Cardiac septum (tissue), 1 donor: ENCODE measurements at regions of chr12 and their contacts with region 1.

Region 1: DNA sequence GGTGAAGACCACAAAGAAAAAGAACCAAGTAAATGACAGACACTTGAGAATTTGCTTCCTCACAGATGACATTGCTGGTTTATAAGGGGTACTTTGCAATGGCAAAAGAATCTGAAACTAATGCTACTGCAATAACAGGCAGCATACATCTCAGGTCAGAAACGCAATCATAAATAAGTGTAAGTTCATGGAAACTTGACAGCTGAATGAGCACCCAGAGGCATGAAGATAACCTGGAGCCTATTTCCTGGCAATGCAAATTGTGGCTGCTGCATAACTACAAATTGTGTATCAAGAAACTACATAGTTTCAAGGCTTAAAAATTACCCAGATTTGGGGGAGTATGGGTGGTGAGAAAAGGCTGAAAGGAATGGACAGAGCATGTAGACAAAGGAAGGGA is 8.5 kb upstream of the MYO1A start:
- DNase-seq: no peak

Region 2: DNA sequence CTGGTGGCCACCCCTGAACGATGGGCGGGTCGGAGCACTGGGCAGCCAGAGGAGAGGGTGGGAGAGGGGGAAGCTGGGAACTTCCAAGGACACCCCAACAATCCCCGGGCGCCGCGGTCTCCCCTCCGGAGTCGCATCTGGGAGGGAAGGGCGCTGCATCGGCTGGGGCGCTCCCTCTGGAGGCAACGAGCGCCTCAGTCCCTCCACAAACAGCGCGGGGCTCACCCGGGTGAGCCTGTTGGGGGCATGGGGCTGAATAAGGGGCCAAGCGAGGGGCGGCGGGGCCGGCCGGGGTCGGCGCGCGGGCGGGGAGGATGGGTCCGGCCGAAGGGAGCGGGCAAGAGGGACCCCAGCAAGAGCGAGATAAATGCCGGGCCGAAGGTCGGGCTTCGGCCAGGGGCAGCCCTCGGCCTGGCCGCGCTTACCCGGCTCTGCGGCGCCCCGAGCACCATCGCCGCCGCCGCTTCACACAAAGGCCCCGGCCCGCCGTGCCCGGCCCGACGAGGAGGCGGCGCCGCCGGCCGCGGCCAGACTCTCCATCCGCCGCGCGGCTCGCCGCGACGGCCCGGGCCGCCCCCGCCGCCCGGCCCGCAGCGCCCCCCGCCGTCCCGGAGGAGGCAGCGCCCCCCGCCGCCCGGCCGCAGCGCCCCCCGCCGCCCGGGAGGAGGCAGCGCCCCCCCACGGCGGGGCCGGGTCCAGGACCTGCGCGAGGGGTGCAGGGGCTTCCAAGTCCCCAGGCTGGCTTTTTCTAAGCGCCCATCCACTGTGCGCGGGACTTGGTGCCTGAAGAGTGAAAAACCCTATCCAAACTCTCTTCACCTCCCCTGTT is 52.3 kb before region 1 on chr12 and contains the start of gene ZBTB39:
- intact Hi-C with region 1: loop called (anchors 2 kb)
- DNase-seq: no peak
- total RNA-seq, gene ZBTB39: 3.5 TPM